ENCODE measurements at regions of chr12 and their contacts with region 1.

Region 1: GRCh38 chr12:70271025-70271424 is 27.8 kb downstream of the CNOT2 start:
- DNase-seq: no peak
- ATAC-seq: no peak
- H3K4me3 Mint-ChIP-seq: no peak overlapping the region
- H3K27ac Mint-ChIP-seq: no peak overlapping the region
- H3K4me1 Mint-ChIP-seq: peaks cover 76% of the 10 kb centered on the region
- H3K27me3 Mint-ChIP-seq: no peaks in the 10 kb centered on the region
- CTCF ChIP-seq: no peak

Region 2: DNA sequence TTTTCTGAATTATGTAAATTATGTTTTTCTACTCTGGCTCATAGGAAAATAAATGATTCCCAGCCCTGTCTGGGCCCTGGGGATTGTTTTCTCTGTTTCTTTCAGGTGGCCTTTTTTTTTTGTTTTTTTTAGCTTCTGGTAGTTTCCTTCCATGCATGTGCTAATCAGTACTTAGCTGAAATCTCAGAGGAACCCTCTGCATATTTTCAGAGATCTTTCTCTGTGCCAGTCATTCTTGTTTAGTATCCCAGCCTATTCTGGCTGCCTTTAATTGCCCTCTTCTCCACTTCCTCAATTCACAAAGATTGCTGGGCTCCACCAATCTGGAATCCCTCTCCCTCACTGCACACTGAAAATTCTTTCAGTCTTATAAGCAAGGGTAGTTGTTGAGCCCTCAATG is 19.1 kb after region 1 on chr12:
- CTCF ChIA-PET with region 1: no interaction called
- POLR2A ChIA-PET with region 1: no interaction called
- intact Hi-C with region 1: loop called (anchors 2 kb)
- DNase-seq: no peak
- ATAC-seq: no peak
- H3K4me3 Mint-ChIP-seq: no peak overlapping the region
- H3K27ac Mint-ChIP-seq: no peak overlapping the region
- H3K4me1 Mint-ChIP-seq: peaks cover 25% of the 10 kb centered on the region
- H3K27me3 Mint-ChIP-seq: no peaks in the 10 kb centered on the region
- CTCF ChIP-seq: no peak

Region 3: GRCh38 chr12:70487440-70487839 is 216.4 kb after region 1 on chr12:
- CTCF ChIA-PET with region 1: no interaction called
- POLR2A ChIA-PET with region 1: no interaction called
- intact Hi-C with region 1: no loop called
- DNase-seq: no peak
- ATAC-seq: peak; percentile 40
- H3K4me3 Mint-ChIP-seq: no peak overlapping the region
- H3K27ac Mint-ChIP-seq: peak overlapping the region; percentile 38
- H3K4me1 Mint-ChIP-seq: peaks cover 38% of the 10 kb centered on the region
- H3K27me3 Mint-ChIP-seq: no peaks in the 10 kb centered on the region
- CTCF ChIP-seq: no peak

Measured in activated B cell treated with CpG ODN at 0.5 μM for 24 hours (primary cell).